Right ventricle myocardium inferior (tissue), 1 donor: ENCODE measurements at regions of chr15 and their contacts with region 1.

Region 1: DNA sequence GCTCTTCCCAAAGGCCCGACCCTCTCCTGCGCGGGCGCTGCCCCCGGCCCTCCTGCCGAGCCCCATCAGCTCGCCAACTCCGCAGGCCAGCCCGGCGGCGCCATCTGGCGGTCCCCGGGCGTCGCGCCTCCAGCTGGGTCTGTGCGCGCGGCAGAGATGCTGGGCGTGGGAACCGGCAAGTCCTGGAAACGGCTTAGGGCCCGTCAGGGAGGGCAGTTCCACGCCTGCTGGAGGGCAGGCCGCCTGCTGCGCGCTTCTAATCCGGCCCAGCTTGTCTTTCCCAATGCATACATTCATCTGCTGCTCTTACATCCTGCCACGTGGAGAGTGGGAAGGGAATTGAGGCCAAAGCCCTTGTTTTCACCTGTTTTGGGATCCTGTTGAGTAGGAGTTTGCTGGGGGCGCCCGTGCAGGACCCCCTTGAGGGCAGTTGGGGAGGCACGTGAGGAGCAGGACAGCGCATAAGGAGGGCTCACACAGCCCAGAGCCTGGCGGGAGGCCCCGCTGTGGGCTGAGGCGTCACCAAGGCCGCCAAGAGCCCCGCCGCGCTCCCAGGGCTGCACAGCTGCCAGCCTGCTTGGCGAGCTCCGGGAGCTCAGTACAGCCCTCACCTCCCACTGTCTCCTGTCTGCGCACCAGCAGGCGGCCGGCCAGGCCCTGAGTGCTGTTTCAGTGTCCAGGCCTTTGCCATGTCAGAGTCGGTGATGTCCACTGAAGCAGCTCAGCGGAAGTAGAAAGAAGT is 165.6 kb downstream of the NSMCE3 start:
- DNase-seq: peak; percentile 78
- ATAC-seq: peak; percentile 91

Region 2: GRCh38 chr15:28885630-28886430 is 218.2 kb before region 1 on chr15 and contains the start of gene APBA2:
- intact Hi-C with region 1: loop called (anchors 10 kb)
- DNase-seq: no peak
- ATAC-seq: no peak
- total RNA-seq, gene APBA2: 2.0 TPM

Region 3: GRCh38 chr15:28975766-28976179 is 128.2 kb before region 1 on chr15:
- intact Hi-C with region 1: loop called (anchors 10 kb)
- DNase-seq: no peak
- ATAC-seq: no peak